HepG2 (cell line): ENCODE measurements at regions of chr4 and their contacts with region 1.

Region 1: DNA sequence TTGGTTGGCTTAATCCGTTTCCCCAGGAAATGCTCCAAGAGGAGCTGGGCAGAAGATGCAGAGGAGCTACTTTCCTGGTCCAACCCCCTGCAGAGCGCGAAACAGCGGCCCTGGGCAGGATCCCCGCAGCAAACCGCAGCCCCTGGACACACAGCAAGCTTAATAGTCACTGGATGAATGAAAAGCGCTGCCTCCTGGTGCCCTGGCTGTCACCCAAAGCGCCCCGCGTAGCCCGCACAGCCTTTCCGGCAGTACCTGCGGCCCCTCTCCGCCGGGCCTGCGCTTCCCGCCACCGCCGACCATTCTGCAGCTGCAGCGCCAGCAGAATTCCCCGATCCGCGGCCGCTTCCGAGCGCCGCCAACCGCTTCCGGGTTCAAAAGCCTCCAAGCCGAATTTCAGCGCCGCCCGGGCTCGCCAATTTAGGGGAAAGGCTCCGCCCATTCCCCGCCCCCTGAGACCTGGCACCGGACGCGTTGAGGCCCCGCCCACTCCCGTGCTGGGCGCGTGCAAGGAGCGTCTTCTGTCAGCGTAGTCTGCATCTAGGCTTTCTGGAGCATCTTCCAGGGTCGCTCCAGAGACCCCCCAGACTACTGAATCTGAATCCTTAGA is at the start of gene HPF1:
- DNase-seq: peak; percentile 83
- ATAC-seq: peak; percentile 98
- H3K4me3 ChIP-seq: peak within 1 kb of the TSS; percentile 76 to 91 (median 85)
- H3K27ac ChIP-seq: peak within 1 kb of the TSS; percentile 52
- H3K4me1 ChIP-seq: peaks cover 14% of the 10 kb centered on the region
- H3K27me3 ChIP-seq: no peaks in the 10 kb centered on the region; a peak in 1 of 5 replicates
- CTCF ChIP-seq: no peak; the same call in 1 of the 2 replicates
- EP300 ChIP-seq: no peak
- POLR2A ChIP-seq: peak; percentile 37 to 60; a peak in 3 of 4 replicates
- RAD21 ChIP-seq: peak; percentile 28
- total RNA-seq, gene HPF1: 14.8 and 23.0 TPM in 2 replicates

Region 2: DNA sequence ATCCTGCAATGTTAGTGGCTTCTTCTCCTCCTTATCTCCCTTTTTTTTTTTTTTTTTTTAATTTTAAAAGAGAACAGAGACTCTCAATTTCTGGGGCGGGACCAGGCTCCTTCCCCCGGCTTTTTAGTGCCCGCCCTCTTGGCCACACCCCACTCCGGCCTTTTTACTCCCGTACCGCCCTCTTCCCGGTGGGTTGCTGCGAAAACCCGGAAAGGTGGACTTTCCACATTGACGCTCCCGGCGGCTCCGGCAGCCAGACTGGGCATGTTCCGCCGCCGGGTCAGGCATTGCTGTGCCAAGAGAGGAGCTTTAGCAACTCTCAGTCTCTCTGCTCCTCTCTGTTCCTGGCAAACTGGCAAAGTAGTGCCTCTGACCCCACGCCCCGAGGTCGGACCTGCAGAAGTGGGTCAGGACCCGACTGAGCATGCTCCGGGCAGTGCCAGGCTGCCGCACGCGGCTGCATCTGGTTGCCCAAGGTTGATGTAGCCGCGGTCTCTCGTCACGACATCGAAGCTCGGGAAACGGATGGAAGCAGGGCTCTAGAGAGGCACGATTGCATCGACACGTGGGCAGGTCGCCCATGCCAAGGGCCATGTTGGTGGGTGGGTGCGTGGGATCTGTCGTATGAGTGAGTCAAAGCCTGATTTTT is 269.6 kb after region 1 on chr4:
- CTCF ChIA-PET with region 1: no interaction called
- POLR2A ChIA-PET with region 1: no interaction called
- in situ Hi-C with region 1: no loop called
- intact Hi-C with region 1: loop called (anchors 5 kb)
- DNase-seq: peak; percentile 78
- ATAC-seq: peak; percentile 69
- H3K4me3 ChIP-seq: peak overlapping the region; percentile 68 to 96 (median 90)
- H3K27ac ChIP-seq: no peak overlapping the region
- H3K4me1 ChIP-seq: peaks cover 11% of the 10 kb centered on the region
- H3K27me3 ChIP-seq: peaks cover 0 to 15% of the 10 kb centered on the region in 2 experiments; a peak in 3 of 5 replicates
- CTCF ChIP-seq: 0 out of 2 replicates have a peak, but pooled peaks have one; percentile 11
- EP300 ChIP-seq: no peak
- POLR2A ChIP-seq: no peak
- RAD21 ChIP-seq: peak; percentile 45